K562 (cell line): ENCODE measurements at regions of chr2 and their contacts with region 1.

Region 1: DNA sequence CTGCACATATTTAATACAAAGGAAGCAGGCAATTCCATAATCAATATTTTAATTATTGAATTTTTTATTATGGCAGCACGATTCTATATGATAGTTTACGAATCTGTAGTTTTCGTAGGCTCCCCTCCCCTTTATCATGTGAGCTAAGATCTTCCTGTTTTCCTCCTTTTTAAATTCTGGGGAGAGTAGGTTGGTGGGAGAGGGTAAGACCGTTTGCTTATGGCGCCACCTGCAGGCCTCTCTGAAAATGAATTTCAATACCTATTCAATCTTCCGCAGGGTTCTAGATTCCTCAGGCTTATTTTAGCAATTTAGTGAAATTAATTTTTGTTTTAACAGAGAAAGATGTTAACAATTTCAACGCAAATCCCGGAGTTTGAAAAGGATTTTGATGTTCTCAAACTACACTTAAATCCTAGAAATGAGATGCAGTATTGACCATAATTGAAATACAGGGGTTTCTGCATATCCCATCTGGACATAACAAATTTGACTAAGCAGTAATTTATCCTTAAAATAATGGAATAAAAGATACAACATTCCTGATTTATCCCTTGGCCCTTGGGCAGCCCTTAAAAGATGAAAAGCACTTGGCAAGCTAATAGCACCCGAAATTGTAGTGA is 12.8 kb upstream of the GBX2 start:
- DNase-seq: peak; percentile 64 to 80 (median 72)
- ATAC-seq: peak; percentile 61
- H3K4me3 ChIP-seq: no peak overlapping the region
- H3K27ac ChIP-seq: no peak overlapping the region
- H3K4me1 ChIP-seq: peaks cover 0 to 20% of the 10 kb centered on the region in 2 experiments; a peak in 2 of 5 replicates
- H3K27me3 ChIP-seq: no peaks in the 10 kb centered on the region
- CTCF ChIP-seq: peak; percentile 56 to 74 (median 63); a peak in 5 of 6 replicates
- EP300 ChIP-seq: no peak
- POLR2A ChIP-seq: no peak
- RAD21 ChIP-seq: peak; percentile 58 to 66

Region 2: GRCh38 chr2:235766278-235766677 is 414.7 kb before region 1 on chr2:
- CTCF ChIA-PET with region 1: interaction called, 8 read pairs
- POLR2A ChIA-PET with region 1: no interaction called
- in situ Hi-C with region 1: no loop called
- intact Hi-C with region 1: loop called (anchors 1 kb)
- DNase-seq: peak; percentile 46 to 66 (median 60)
- ATAC-seq: peak; percentile 99
- H3K4me3 ChIP-seq: no peak overlapping the region
- H3K27ac ChIP-seq: no peak overlapping the region
- H3K4me1 ChIP-seq: peaks cover 0 to 2% of the 10 kb centered on the region in 2 experiments; a peak in 1 of 5 replicates
- H3K27me3 ChIP-seq: no peaks in the 10 kb centered on the region
- CTCF ChIP-seq: peak; percentile 64 to 77 (median 65)
- EP300 ChIP-seq: no peak
- POLR2A ChIP-seq: no peak
- RAD21 ChIP-seq: peak; percentile 28 to 59; a peak in 3 of 4 replicates

Region 3: DNA sequence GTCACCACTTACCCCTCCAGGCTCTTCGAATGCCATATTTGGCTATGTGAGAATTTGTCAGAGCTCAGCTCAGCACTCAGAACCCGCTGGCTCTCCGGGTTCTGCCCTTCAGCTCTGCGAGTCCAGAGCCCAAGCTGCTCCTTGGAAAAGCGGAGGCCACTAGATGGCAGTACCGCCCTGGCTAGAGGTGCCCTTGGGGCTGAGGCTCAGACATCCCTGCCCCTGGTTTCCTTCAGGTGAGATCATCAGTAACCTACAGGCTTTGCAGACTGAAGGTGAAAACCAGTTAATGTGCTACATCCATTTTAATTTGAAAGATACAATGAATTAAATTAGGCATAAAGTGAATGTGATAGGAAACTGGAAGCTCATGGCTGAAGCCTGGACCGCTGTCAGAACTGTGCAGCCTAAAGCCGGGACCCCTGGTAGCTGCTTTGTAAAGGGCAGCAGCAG is 401.5 kb before region 1 on chr2:
- CTCF ChIA-PET with region 1: interaction called, 5 read pairs
- POLR2A ChIA-PET with region 1: no interaction called
- in situ Hi-C with region 1: loop called (anchors 5 kb)
- intact Hi-C with region 1: no loop called
- DNase-seq: peak; percentile 55 to 67 (median 59)
- ATAC-seq: peak; percentile 96
- H3K4me3 ChIP-seq: no peak overlapping the region
- H3K27ac ChIP-seq: no peak overlapping the region
- H3K4me1 ChIP-seq: no peaks in the 10 kb centered on the region
- H3K27me3 ChIP-seq: no peaks in the 10 kb centered on the region
- CTCF ChIP-seq: peak; percentile 69 to 77 (median 72)
- EP300 ChIP-seq: no peak
- POLR2A ChIP-seq: no peak
- RAD21 ChIP-seq: peak; percentile 37 to 62; a peak in 3 of 4 replicates